Endothelial cell of umbilical vein (primary cell): ENCODE measurements at regions of chr1 and their contacts with region 1.

Region 1: DNA sequence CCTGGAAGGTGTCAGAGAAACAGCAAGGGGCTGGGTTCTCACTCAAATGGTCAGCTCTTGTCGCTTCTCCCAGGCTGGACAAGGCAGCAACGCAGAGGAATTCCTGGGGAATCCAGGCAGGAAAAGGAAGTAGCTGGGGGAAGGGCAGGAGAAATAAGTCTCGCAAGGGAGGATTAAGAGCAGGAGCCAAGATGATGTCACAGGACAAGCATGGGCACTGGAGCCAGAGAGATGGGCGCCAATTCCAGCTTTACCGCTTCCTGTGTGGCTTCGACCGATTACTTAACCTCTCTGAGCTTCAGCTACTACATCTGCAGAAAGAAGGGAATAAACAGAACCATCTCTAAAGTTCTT is 70.5 kb downstream of the SSBP3 start:
- DNase-seq: peak; percentile 90
- H3K4me3 ChIP-seq: peak overlapping the region in 1 of 3 experiments; percentile 18
- H3K27ac ChIP-seq: peak overlapping the region; percentile 89
- H3K4me1 ChIP-seq: peaks cover 31% of the 10 kb centered on the region
- H3K27me3 ChIP-seq: no peaks in the 10 kb centered on the region
- CTCF ChIP-seq: no peak
- POLR2A ChIP-seq: peak; percentile 75

Region 2: GRCh38 chr1:54028306-54029251 is 307.2 kb before region 1 on chr1:
- CTCF ChIA-PET with region 1: no interaction called
- POLR2A ChIA-PET with region 1: no interaction called
- dilution Hi-C with region 1: no loop called
- intact Hi-C with region 1: no loop called
- DNase-seq: no peak
- H3K4me3 ChIP-seq: no peak overlapping the region
- H3K27ac ChIP-seq: no peak overlapping the region
- H3K4me1 ChIP-seq: no peaks in the 10 kb centered on the region
- H3K27me3 ChIP-seq: no peaks in the 10 kb centered on the region
- CTCF ChIP-seq: no peak
- POLR2A ChIP-seq: no peak

Region 3: GRCh38 chr1:54324251-54325140 is 11.2 kb before region 1 on chr1:
- CTCF ChIA-PET with region 1: interaction called, 15 read pairs
- POLR2A ChIA-PET with region 1: no interaction called
- dilution Hi-C with region 1: no loop called
- intact Hi-C with region 1: loop called (anchors 1 kb)
- DNase-seq: no peak
- H3K4me3 ChIP-seq: no peak overlapping the region
- H3K27ac ChIP-seq: no peak overlapping the region
- H3K4me1 ChIP-seq: peaks cover 35% of the 10 kb centered on the region
- H3K27me3 ChIP-seq: no peaks in the 10 kb centered on the region
- CTCF ChIP-seq: no peak
- POLR2A ChIP-seq: no peak

Region 4: DNA sequence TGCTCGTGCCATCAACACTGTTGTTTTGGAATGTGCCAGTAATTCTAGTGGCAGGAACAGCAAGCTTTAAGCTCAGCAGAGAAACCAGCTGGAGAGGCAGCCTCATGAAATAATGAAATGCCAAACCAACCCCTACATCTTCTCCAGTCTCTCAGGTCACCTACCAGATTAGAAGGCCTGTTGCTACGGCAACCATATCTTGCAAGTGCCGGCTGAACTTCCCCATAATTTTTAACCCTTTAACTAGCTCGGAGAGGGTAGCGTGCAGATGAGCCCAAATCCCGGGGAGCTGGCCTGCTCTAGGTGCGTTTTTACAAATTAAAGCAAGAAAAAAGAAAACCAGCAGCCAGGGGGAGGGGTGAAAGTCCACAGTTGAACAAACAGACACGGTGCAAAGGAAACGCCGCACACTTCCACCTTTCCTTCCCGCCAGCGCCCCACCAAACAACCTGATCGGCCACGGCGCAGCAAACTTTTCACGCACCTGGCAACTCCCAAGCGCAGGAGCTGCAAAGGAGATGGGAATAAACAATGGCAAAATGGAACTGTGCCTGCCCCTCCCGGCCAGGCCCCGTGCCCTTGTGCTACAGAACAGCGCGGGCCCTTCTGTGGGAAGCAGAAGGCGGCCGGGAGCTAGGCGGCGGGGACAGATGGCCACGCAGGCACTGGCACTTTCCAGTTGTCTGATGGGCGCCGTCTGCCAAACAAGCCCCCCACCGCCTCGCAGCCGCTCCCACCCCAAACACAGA is 20.4 kb after region 1 on chr1:
- CTCF ChIA-PET with region 1: no interaction called
- POLR2A ChIA-PET with region 1: no interaction called
- dilution Hi-C with region 1: no loop called
- intact Hi-C with region 1: no loop called
- DNase-seq: no peak
- H3K4me3 ChIP-seq: no peak overlapping the region
- H3K27ac ChIP-seq: no peak overlapping the region
- H3K4me1 ChIP-seq: peaks cover 10% of the 10 kb centered on the region
- H3K27me3 ChIP-seq: no peaks in the 10 kb centered on the region
- CTCF ChIP-seq: no peak
- POLR2A ChIP-seq: no peak

Region 5: DNA sequence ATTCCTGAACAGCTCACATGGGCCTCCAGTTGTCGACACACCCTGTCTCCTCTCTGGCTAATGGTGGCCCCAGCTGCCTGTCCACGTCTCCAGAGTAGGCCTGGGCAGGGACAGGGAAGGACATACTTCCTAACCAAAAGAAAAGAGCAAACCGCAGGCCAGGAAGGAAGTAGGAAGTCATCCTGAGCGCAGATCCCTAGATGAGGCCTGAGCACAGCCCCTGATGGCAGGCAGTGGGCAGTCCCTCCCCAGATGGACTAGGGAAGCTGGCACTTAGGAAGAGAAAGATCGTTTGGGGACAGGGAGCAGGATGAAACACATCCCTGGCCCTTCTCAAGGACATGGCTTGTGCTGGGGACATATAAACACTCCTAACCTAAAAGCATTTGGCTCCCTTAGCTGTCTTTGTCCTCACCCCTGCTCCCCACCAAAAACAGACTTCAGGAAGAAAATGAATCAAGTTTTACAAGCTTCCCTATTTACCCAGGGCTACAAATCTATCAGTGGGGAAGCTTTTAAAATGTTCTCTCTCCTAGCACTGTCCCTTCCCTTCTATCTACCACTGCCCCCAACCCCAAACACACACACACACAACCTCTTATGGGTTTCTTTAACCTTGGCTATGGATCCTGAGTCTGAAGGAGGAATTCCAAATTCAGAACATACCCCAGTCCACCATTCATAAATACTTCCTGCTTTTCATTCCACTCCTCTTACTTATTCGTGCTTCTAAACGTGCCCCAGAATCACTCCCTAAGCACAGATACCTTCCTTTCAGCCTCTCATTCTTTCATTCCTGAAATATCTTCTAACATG is 49.4 kb after region 1 on chr1:
- CTCF ChIA-PET with region 1: interaction called, 3 read pairs
- POLR2A ChIA-PET with region 1: no interaction called
- dilution Hi-C with region 1: no loop called
- intact Hi-C with region 1: loop called (anchors 2 kb)
- DNase-seq: peak; percentile 28
- H3K4me3 ChIP-seq: no peak overlapping the region
- H3K27ac ChIP-seq: no peak overlapping the region
- H3K4me1 ChIP-seq: peaks cover 18% of the 10 kb centered on the region
- H3K27me3 ChIP-seq: no peaks in the 10 kb centered on the region
- CTCF ChIP-seq: no peak
- POLR2A ChIP-seq: no peak